CD8-positive, alpha-beta T cell (primary cell): ENCODE measurements at regions of chr1 and their contacts with region 1.

Region 1: DNA sequence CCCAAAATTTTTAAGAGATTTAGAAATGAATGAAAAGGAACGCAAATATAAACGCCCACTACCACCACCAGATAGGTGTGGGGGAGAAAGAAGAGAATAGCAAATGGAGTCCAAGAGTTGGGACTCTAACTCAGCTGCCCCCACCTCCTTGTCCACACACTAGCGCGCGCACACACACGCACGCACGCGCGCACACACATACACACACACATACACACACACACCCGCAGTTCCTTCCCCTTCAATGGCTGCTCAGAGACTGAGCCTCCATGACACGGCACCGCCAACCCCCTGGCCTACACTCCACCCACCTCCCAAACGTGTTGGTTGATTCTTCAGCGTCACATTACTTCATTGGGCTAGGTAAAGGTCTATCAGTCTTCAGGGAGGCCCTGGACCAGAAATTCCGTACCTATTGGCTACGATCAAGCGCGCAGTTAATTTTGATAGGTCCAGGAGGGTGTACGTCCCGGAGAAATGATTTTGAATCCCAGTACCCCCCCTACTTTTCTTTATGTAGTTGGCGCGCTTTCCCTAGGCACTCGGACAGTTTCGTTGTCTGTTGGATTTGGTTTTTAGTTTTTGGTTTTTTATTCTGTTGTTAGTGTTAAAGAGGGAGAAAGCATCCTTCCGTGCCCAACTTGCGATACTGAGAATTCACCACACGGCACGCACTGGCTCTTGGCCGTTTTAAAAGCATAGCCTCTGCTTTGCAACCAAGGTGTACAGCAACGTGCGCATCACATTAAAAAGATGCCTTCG is at the start of gene ANP32E:
- DNase-seq: peak; percentile 86 to 99 (median 94)
- ATAC-seq: peak; percentile 90
- H3K4me3 ChIP-seq: peak within 1 kb of the TSS; percentile 72 to 80
- H3K4me3 Mint-ChIP-seq: no peak within 1 kb of the TSS
- H3K27ac ChIP-seq: peak within 1 kb of the TSS; percentile 89 to 96
- H3K27ac Mint-ChIP-seq: peak within 1 kb of the TSS; percentile 93
- H3K4me1 ChIP-seq: peaks cover 12% of the 10 kb centered on the region
- H3K4me1 Mint-ChIP-seq: peaks cover 18% of the 10 kb centered on the region
- H3K27me3 ChIP-seq: no peaks in the 10 kb centered on the region
- H3K27me3 Mint-ChIP-seq: no peaks in the 10 kb centered on the region
- CTCF ChIP-seq: no peak
- total RNA-seq, gene ANP32E: 30.6 to 35.0 TPM

Region 2: DNA sequence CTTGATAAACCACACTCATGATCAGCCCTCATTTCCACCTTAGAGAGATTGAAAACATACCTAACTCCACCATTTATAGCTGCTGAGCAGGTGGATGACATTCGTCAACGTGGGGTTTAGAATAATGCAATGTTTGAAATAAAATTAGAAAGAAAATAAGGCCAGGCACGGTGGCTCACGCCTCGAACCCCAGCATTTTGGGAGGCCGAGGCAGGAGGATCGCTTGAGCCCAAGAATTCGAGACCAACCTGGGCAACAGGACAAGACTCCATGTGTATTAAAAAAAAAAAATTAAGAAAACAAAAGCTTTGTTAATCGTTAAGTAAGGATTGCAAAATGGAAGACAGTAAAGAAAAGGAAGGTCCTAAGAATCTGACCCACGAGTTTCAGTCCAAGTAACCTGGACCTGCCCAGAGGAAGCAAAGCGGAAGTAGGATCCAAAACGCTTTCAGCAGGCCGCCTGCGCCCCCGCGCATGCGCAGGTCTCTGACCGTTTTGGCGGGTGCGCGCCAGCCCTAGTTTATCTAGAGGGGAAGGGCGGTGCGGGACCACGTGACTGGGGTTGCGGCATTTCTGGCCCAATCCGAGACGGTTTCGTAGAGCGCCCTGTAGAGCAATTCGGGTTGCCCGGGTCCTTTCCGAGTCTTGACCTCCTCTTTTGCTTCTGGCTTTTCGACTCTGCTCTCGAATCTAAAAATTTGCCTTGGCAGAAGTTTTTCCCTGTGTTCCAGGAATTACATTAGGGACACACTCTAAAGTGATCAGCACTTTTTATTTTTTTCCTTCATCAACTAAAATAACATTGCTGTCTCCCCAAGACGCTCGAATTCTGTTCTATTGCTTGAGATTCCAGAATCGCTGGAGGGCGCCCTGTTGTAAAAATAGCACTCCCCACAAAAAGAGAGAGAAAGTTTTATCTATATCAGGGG is 22.6 kb before region 1 on chr1:
- CTCF ChIA-PET with region 1: interaction called, 7 read pairs
- POLR2A ChIA-PET with region 1: interaction called, 8 read pairs
- intact Hi-C with region 1: loop called (anchors 1 kb)
- DNase-seq: peak; percentile 82 to 96 (median 92)
- ATAC-seq: peak; percentile 99
- H3K4me3 ChIP-seq: peak overlapping the region; percentile 54 to 62
- H3K4me3 Mint-ChIP-seq: peak overlapping the region; percentile 93
- H3K27ac ChIP-seq: peak overlapping the region; percentile 70 to 74
- H3K27ac Mint-ChIP-seq: peak overlapping the region; percentile 98
- H3K4me1 ChIP-seq: peaks cover 9% of the 10 kb centered on the region
- H3K4me1 Mint-ChIP-seq: peaks cover 13% of the 10 kb centered on the region
- H3K27me3 ChIP-seq: no peaks in the 10 kb centered on the region
- H3K27me3 Mint-ChIP-seq: no peaks in the 10 kb centered on the region
- CTCF ChIP-seq: peak; percentile 54

Region 3: DNA sequence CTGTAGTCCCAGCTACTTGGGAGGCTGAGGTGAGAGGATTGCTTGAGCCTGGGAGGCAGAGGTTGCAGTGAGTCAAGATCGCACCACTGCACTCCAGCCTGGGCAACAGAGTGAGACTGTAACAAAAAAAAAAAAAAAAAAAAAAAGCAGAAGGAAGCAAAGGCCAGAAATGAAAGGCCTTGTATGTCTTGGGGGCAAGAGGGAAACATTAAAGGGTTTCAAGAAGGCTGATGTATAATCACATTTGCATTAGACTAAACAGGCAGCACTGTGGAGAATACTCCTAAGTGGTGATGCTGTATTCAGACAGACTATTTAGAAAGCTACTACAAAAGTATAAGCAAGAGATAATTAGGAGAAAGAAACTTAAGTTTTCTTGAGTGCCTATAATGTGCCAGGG is 10.5 kb before region 1 on chr1:
- CTCF ChIA-PET with region 1: interaction called, 6 read pairs
- POLR2A ChIA-PET with region 1: interaction called, 12 read pairs
- intact Hi-C with region 1: no loop called
- DNase-seq: no peak
- ATAC-seq: no peak
- H3K4me3 ChIP-seq: no peak overlapping the region
- H3K4me3 Mint-ChIP-seq: no peak overlapping the region
- H3K27ac ChIP-seq: no peak overlapping the region
- H3K27ac Mint-ChIP-seq: no peak overlapping the region
- H3K4me1 ChIP-seq: no peaks in the 10 kb centered on the region
- H3K4me1 Mint-ChIP-seq: no peaks in the 10 kb centered on the region
- H3K27me3 ChIP-seq: no peaks in the 10 kb centered on the region
- H3K27me3 Mint-ChIP-seq: no peaks in the 10 kb centered on the region
- CTCF ChIP-seq: no peak

Region 4: GRCh38 chr1:150293433-150294168 is 57.6 kb after region 1 on chr1 and contains the start of gene MRPS21:
- CTCF ChIA-PET with region 1: no interaction called
- POLR2A ChIA-PET with region 1: no interaction called
- intact Hi-C with region 1: loop called in 1 of 2 experiments (anchors 1 kb)
- DNase-seq: peak; percentile 75 to 96 (median 84)
- ATAC-seq: peak; percentile 94
- H3K4me3 ChIP-seq: peak within 1 kb of the TSS; percentile 72 to 79
- H3K4me3 Mint-ChIP-seq: peak within 1 kb of the TSS; percentile 91
- H3K27ac ChIP-seq: peak within 1 kb of the TSS; percentile 96 to 98
- H3K27ac Mint-ChIP-seq: peak within 1 kb of the TSS; percentile 94
- H3K4me1 ChIP-seq: peaks cover 15% of the 10 kb centered on the region
- H3K4me1 Mint-ChIP-seq: peaks cover 35% of the 10 kb centered on the region
- H3K27me3 ChIP-seq: no peaks in the 10 kb centered on the region
- H3K27me3 Mint-ChIP-seq: no peaks in the 10 kb centered on the region
- CTCF ChIP-seq: no peak
- total RNA-seq, gene MRPS21: 41.6 to 43.9 TPM